Naive thymus-derived CD4-positive, alpha-beta T cell (primary cell): ENCODE measurements at regions of chr3 and their contacts with region 1.

Region 1: GRCh38 chr3:138915503-138916498 is 31.1 kb downstream of the FOXL2 start:
- DNase-seq: peak; percentile 66 to 91 (median 80)
- ATAC-seq: peak; percentile 90
- H3K4me3 ChIP-seq: peak overlapping the region; percentile 88
- H3K4me3 Mint-ChIP-seq: peak overlapping the region; percentile 54 to 88 (median 86)
- H3K27ac ChIP-seq: peak overlapping the region; percentile 62
- H3K27ac Mint-ChIP-seq: peak overlapping the region in 6 of 9 donors; percentile 21 to 77 (median 62)
- H3K4me1 ChIP-seq: no peaks in the 10 kb centered on the region
- H3K4me1 Mint-ChIP-seq: peaks cover 5 to 9% (median 6%) of the 10 kb centered on the region in 7 donors
- H3K27me3 ChIP-seq: no peaks in the 10 kb centered on the region
- H3K27me3 Mint-ChIP-seq: peaks cover 0 to 37% (median 0%) of the 10 kb centered on the region in 5 donors

Region 2: DNA sequence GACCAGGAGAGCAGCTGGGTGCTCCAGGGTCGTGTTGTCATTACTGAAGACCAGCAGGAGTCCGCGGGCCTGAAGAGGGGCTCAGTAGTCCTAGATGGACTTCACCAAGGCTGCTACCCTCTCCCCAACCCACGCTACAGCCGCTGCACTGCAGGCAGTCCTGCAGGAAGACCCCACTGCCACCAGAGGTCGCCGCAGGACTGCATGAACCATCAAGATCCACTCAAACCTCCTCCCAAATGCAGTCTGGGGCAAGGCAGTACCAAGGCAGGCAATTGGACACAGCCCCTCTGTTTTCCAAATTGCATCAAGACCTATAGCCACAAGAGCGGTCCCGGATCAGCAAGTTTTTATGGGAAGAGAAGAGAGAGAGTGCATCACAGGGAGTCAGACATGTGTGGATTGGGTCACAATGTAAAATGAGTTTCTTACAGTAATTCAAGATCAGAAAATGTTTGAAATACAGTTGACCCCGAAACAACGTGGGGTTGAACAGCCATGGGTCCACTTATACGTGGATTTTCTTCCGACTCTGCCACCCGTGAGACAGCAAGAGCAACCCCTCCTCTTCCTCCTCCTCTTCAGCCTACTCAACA is 847.1 kb before region 1 on chr3:
- CTCF ChIA-PET with region 1: interaction called, 3 read pairs
- POLR2A ChIA-PET with region 1: no interaction called
- intact Hi-C with region 1: loop called (anchors 1 to 5 kb)
- DNase-seq: peak; percentile 36 to 78 (median 55)
- ATAC-seq: peak; percentile 85
- H3K4me3 ChIP-seq: no peak overlapping the region
- H3K4me3 Mint-ChIP-seq: no peak overlapping the region
- H3K27ac ChIP-seq: no peak overlapping the region
- H3K27ac Mint-ChIP-seq: no peak overlapping the region
- H3K4me1 ChIP-seq: no peaks in the 10 kb centered on the region
- H3K4me1 Mint-ChIP-seq: peaks cover 0 to 8% (median 0%) of the 10 kb centered on the region in 7 donors
- H3K27me3 ChIP-seq: no peaks in the 10 kb centered on the region
- H3K27me3 Mint-ChIP-seq: peaks cover 6 to 15% (median 12%) of the 10 kb centered on the region in 5 donors

Region 3: GRCh38 chr3:138479438-138479863 is 436.4 kb before region 1 on chr3:
- CTCF ChIA-PET with region 1: no interaction called
- POLR2A ChIA-PET with region 1: no interaction called
- intact Hi-C with region 1: loop called in 1 of 2 experiments (anchors 1 kb)
- DNase-seq: peak in 1 of 9 donors; percentile 8
- ATAC-seq: no peak
- H3K4me3 ChIP-seq: no peak overlapping the region
- H3K4me3 Mint-ChIP-seq: no peak overlapping the region
- H3K27ac ChIP-seq: no peak overlapping the region
- H3K27ac Mint-ChIP-seq: no peak overlapping the region
- H3K4me1 ChIP-seq: no peaks in the 10 kb centered on the region
- H3K4me1 Mint-ChIP-seq: peaks cover 0 to 2% (median 0%) of the 10 kb centered on the region in 7 donors
- H3K27me3 ChIP-seq: no peaks in the 10 kb centered on the region
- H3K27me3 Mint-ChIP-seq: peaks cover 0 to 11% (median 0%) of the 10 kb centered on the region in 5 donors

Region 4: DNA sequence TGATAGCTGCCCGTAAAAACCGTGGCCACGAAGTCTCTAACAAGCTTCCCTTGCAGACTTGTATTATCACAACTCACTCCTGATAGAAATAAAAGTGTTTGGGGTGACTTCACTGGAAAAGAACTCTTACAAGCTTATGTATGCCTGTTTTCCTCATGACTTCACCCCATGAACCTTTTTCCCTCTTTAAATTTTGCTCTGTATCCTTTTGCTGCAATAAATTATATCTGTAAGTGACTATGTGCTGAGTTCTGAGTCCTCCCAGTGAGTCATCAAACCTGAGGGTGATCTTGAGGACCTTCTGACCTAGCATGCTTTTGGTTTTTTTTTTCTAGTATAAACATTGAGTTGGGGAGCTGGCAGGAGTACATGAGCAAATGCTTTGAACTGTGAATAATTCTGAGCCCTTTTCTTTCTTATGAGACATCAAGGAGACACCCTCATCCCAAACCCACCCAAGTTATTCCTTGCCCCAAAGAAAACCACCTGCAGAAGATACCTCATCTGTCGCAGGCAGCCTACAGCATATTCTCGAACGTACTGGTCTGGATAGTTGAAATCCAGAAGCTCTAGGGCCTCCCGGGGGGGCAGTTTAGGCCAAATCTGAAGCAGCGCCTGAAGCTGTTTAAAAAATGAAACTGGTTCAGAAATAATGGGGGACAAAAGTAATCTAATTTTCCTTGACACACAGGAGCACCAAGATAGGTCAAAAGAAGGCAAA is 221.4 kb before region 1 on chr3:
- CTCF ChIA-PET with region 1: interaction called, 73 read pairs
- POLR2A ChIA-PET with region 1: interaction called, 3 read pairs
- intact Hi-C with region 1: loop called (anchors 1 kb)
- DNase-seq: no peak
- ATAC-seq: no peak
- H3K4me3 ChIP-seq: no peak overlapping the region
- H3K4me3 Mint-ChIP-seq: no peak overlapping the region
- H3K27ac ChIP-seq: no peak overlapping the region
- H3K27ac Mint-ChIP-seq: no peak overlapping the region
- H3K4me1 ChIP-seq: no peaks in the 10 kb centered on the region
- H3K4me1 Mint-ChIP-seq: peaks cover 0 to 4% (median 0%) of the 10 kb centered on the region in 7 donors
- H3K27me3 ChIP-seq: no peaks in the 10 kb centered on the region
- H3K27me3 Mint-ChIP-seq: no peaks in the 10 kb centered on the region

Region 5: DNA sequence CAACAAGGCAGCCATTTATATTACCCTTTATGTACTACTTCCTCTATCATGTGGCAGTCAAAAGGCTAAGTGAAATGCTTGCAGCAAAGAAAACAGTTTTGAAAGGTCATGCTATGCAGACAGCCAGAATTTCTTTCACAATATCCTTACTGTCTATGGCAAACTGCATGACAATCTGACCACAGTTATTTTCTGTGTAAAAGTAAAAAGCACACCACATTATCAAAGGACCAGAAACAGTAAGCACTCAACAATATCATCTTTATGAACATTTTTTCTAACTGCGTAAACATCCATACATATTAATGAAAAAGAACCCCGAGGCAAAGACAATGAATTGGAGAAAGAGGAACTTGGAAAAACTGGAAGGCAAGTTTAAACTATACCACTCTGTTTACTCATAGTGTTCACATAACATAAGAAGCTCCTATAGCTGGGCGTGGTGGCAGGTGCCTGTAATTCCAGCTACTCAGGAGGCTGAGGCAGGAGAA is 129.0 kb before region 1 on chr3:
- CTCF ChIA-PET with region 1: no interaction called
- POLR2A ChIA-PET with region 1: no interaction called
- intact Hi-C with region 1: loop called in 1 of 2 experiments (anchors 10 kb)
- DNase-seq: no peak
- ATAC-seq: peak; percentile 80
- H3K4me3 ChIP-seq: no peak overlapping the region
- H3K4me3 Mint-ChIP-seq: peak overlapping the region in 2 of 10 donors; percentile 15 to 22
- H3K27ac ChIP-seq: no peak overlapping the region
- H3K27ac Mint-ChIP-seq: peak overlapping the region in 8 of 9 donors; percentile 0 to 73 (median 32)
- H3K4me1 ChIP-seq: peaks cover 0 to 3% of the 10 kb centered on the region in 2 donors
- H3K4me1 Mint-ChIP-seq: peaks cover 18 to 44% (median 35%) of the 10 kb centered on the region in 7 donors
- H3K27me3 ChIP-seq: no peaks in the 10 kb centered on the region
- H3K27me3 Mint-ChIP-seq: no peaks in the 10 kb centered on the region

Region 6: DNA sequence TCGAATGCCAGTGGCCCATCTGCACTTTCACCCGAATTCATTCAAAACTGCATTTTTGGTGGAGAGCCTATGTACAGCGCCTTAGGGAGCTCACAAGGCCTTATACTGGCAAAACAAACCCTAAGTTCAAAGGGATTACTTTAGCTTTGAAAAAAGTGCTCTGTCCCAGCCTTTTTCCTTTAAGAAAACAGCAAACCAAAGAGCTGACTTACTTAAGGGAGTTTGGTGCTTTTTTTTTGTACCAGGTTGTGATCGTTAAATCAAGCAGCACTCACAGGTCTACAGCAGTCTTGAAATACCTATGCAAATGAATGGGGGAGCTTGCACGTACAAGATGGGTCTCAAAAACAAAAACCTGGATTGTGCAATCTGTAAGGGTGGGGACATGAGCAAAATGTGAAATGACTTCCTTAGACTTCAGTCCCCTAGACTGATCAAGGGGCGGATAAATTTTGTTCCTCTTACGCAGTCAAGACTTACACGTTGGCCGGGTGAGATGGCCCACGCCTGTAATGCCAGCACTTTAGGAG is 69.5 kb before region 1 on chr3:
- CTCF ChIA-PET with region 1: no interaction called
- POLR2A ChIA-PET with region 1: no interaction called
- intact Hi-C with region 1: no loop called
- DNase-seq: no peak
- ATAC-seq: peak; percentile 60
- H3K4me3 ChIP-seq: no peak overlapping the region
- H3K4me3 Mint-ChIP-seq: no peak overlapping the region
- H3K27ac ChIP-seq: no peak overlapping the region
- H3K27ac Mint-ChIP-seq: no peak overlapping the region
- H3K4me1 ChIP-seq: no peaks in the 10 kb centered on the region
- H3K4me1 Mint-ChIP-seq: peaks cover 0 to 2% (median 0%) of the 10 kb centered on the region in 7 donors
- H3K27me3 ChIP-seq: no peaks in the 10 kb centered on the region
- H3K27me3 Mint-ChIP-seq: no peaks in the 10 kb centered on the region

Region 7: DNA sequence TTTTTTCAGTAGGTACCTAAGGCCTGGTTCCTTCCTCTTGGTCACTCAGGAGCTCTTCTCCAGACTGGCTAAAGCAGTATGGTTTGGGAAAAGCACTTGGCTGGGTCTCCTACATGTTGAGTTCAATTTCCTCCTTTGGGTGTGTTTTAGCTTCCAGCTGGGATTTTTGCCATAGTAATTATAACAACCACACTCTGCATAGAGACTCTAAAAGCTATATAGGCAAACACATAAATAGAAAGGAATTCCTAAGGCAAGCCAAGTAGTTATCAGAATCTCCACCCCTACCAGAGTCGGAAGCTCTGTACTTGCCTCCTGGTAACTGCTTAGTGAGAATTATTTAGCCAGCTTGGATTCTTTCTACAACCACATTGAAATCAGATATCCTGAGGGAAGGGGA is 17.5 kb before region 1 on chr3:
- CTCF ChIA-PET with region 1: interaction called, 11 read pairs
- POLR2A ChIA-PET with region 1: no interaction called
- intact Hi-C with region 1: no loop called
- DNase-seq: no peak
- ATAC-seq: no peak
- H3K4me3 ChIP-seq: no peak overlapping the region
- H3K4me3 Mint-ChIP-seq: no peak overlapping the region
- H3K27ac ChIP-seq: no peak overlapping the region
- H3K27ac Mint-ChIP-seq: no peak overlapping the region
- H3K4me1 ChIP-seq: no peaks in the 10 kb centered on the region
- H3K4me1 Mint-ChIP-seq: peaks cover 0 to 4% (median 0%) of the 10 kb centered on the region in 7 donors
- H3K27me3 ChIP-seq: no peaks in the 10 kb centered on the region
- H3K27me3 Mint-ChIP-seq: no peaks in the 10 kb centered on the region